ENCODE measurements at regions of chr7 and their contacts with region 1.

Region 1: GRCh38 chr7:37181550-37181932 is 267.1 kb downstream of the ELMO1 start:
- DNase-seq: no peak
- H3K4me3 Mint-ChIP-seq: no peak overlapping the region
- H3K27ac Mint-ChIP-seq: no peak overlapping the region
- H3K4me1 Mint-ChIP-seq: no peaks in the 10 kb centered on the region
- H3K27me3 Mint-ChIP-seq: no peaks in the 10 kb centered on the region
- CTCF ChIP-seq: no peak

Region 2: GRCh38 chr7:36487756-36488336 is 693.7 kb before region 1 on chr7:
- CTCF ChIA-PET with region 1: interaction called, 37 read pairs
- intact Hi-C with region 1: loop called (anchors 1 kb)
- DNase-seq: peak; percentile 58
- H3K4me3 Mint-ChIP-seq: no peak overlapping the region
- H3K27ac Mint-ChIP-seq: no peak overlapping the region
- H3K4me1 Mint-ChIP-seq: peaks cover 19% of the 10 kb centered on the region
- H3K27me3 Mint-ChIP-seq: no peaks in the 10 kb centered on the region
- CTCF ChIP-seq: peak; percentile 90

Region 3: DNA sequence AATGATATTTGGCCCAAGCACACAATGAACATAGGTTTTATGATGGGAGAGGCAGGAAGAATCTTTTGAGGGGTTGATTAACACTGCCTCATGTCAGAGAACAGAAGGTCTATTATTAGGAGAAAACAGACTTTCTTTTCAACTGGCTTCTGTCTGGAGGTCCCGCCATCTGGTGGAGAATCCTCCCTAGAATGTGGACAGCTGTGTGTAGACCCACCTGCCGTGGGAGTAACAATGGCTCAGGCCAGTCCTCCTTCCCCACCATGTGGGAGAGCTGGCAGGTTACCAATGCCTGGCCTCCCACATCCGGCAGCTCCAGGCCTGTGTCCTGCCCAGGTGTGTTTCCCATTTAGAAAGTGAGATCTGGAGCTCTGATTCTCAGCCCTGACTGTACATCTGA is 386.9 kb before region 1 on chr7:
- CTCF ChIA-PET with region 1: interaction called, 10 read pairs
- intact Hi-C with region 1: no loop called
- DNase-seq: peak; percentile 81
- H3K4me3 Mint-ChIP-seq: no peak overlapping the region
- H3K27ac Mint-ChIP-seq: no peak overlapping the region
- H3K4me1 Mint-ChIP-seq: peaks cover 36% of the 10 kb centered on the region
- H3K27me3 Mint-ChIP-seq: peaks cover 13% of the 10 kb centered on the region
- CTCF ChIP-seq: no peak

Region 4: DNA sequence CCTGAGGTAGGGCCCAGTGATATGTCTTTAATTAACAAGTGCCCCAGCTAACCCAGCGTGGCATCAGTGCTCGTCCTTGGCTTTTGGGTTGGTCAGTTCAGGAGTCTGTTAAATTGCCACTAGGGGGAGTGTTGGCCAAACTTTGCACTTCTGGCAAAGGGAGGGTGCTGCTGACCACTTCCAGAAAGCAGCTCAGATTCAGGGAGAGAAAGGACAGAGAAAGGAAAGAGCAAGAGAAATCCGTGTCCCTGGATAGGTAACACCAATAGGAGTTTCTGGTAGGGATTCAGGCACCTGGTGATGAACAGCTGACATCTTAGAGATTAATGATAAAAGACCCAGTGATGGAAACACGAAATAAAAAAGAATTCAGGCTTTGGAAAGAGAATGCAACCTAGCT is 214.2 kb before region 1 on chr7:
- CTCF ChIA-PET with region 1: interaction called, 99 read pairs
- intact Hi-C with region 1: loop called (anchors 1 kb)
- DNase-seq: peak; percentile 75
- H3K4me3 Mint-ChIP-seq: no peak overlapping the region
- H3K27ac Mint-ChIP-seq: no peak overlapping the region
- H3K4me1 Mint-ChIP-seq: peaks cover 51% of the 10 kb centered on the region
- H3K27me3 Mint-ChIP-seq: no peaks in the 10 kb centered on the region
- CTCF ChIP-seq: peak; percentile 87

Region 5: GRCh38 chr7:37031571-37032257 is 149.8 kb before region 1 on chr7:
- CTCF ChIA-PET with region 1: interaction called, 28 read pairs
- intact Hi-C with region 1: loop called (anchors 1 kb)
- DNase-seq: peak; percentile 91
- H3K4me3 Mint-ChIP-seq: peak overlapping the region; percentile 14
- H3K27ac Mint-ChIP-seq: peak overlapping the region; percentile 89
- H3K4me1 Mint-ChIP-seq: peaks cover 39% of the 10 kb centered on the region
- H3K27me3 Mint-ChIP-seq: no peaks in the 10 kb centered on the region
- CTCF ChIP-seq: no peak

Region 6: GRCh38 chr7:37128327-37129034 is 53.1 kb before region 1 on chr7:
- CTCF ChIA-PET with region 1: no interaction called
- intact Hi-C with region 1: no loop called
- DNase-seq: no peak
- H3K4me3 Mint-ChIP-seq: no peak overlapping the region
- H3K27ac Mint-ChIP-seq: no peak overlapping the region
- H3K4me1 Mint-ChIP-seq: no peaks in the 10 kb centered on the region
- H3K27me3 Mint-ChIP-seq: peaks cover 10% of the 10 kb centered on the region
- CTCF ChIP-seq: no peak

Region 7: DNA sequence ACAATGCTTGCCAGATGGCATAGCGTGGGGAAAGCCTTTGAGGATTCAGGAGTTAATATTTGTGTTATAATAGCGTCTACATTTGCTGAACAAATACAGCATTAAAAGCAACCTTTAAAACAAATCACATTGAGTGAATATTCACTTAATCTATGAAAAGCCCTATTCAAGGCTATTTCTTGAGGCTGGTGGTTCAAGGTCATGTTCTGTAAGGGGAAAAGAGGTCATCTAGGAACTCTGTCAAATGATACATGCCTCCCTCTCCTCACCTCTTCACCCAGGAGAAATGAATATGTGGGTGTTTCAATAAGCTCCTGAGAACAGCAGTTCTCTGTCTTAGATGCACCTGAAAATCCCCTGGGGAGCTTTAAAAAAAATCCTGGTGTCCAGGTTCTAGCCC is 35.9 kb before region 1 on chr7:
- CTCF ChIA-PET with region 1: no interaction called
- intact Hi-C with region 1: no loop called
- DNase-seq: no peak
- H3K4me3 Mint-ChIP-seq: no peak overlapping the region
- H3K27ac Mint-ChIP-seq: no peak overlapping the region
- H3K4me1 Mint-ChIP-seq: no peaks in the 10 kb centered on the region
- H3K27me3 Mint-ChIP-seq: no peaks in the 10 kb centered on the region
- CTCF ChIP-seq: no peak

Region 8: DNA sequence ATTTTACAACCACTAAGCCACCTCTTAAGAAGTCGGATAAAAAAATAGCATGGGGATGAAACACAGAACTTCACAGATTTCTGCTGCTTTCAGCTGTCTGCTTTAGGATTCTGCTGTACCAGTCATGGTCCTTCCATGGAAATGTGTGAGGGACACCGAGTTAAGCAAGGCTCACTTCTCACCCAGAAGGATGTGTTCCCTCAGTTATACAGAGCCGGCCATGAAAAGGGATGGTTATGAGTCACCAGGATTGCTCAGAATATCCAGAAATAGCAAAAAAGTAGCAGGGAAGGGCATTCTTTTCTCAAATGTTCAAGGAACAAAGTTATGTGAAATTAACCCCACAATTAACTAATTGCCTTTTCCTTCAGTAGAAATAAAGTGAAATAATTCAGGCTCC is 1325.2 kb after region 1 on chr7:
- CTCF ChIA-PET with region 1: no interaction called
- intact Hi-C with region 1: no loop called
- DNase-seq: no peak
- H3K4me3 Mint-ChIP-seq: no peak overlapping the region
- H3K27ac Mint-ChIP-seq: no peak overlapping the region
- H3K4me1 Mint-ChIP-seq: no peaks in the 10 kb centered on the region
- H3K27me3 Mint-ChIP-seq: peaks cover 89% of the 10 kb centered on the region
- CTCF ChIP-seq: no peak

Measured in Calu3 (cell line).